Tibial artery (tissue), 4 donors: ENCODE measurements at regions of chr1 and their contacts with region 1.

Region 1: DNA sequence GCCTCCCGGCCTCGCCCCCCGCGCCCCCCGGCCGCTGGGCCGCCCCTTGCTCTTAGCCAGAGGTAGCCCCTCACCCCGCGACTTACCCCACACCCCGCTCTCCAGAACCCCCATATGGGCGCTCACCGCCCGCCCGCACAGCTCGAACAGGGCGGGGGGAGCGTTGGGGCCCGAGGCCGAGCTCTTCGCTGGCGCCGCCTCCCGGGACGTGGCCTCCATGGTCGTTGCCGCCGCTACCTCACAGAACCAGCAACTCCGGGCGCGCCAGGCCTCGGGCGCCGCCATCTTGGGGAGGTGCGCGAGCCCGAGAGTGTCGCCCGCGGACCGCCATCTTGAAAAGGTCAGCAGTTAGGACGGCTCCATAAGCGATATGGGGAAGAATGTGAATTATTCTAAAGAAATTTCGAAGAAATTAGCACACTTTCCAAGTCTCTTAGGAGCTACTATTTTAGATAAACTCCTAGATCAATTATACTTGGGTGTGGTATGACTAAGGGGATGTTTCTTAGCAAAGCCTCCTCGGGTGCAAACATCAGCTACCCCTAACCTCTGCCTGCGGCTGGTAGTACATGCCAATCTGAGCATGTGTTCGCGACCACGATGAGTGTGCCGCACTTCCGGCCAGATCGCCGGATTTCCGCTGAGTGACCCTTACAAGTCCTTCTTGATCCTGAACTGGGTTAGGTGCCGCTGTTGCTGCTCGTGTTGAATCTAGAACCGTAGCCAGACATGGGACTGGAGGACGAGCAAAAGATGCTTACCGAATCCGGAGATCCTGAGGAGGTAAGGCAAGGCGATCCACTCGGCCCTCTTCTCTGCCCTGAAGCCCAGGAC is at the starts of genes LRRC41 and UQCRH:
- DNase-seq: peak; percentile 95 to 96
- H3K4me3 ChIP-seq: peak within 1 kb of the TSS; percentile 77 to 87
- H3K27ac ChIP-seq: peak within 1 kb of the TSS; percentile 95 to 97
- H3K4me1 ChIP-seq: peaks cover 0 to 67% (median 48%) of the 10 kb centered on the region in 4 donors
- H3K27me3 ChIP-seq: no peaks in the 10 kb centered on the region
- CTCF ChIP-seq: no peak

Region 2: DNA sequence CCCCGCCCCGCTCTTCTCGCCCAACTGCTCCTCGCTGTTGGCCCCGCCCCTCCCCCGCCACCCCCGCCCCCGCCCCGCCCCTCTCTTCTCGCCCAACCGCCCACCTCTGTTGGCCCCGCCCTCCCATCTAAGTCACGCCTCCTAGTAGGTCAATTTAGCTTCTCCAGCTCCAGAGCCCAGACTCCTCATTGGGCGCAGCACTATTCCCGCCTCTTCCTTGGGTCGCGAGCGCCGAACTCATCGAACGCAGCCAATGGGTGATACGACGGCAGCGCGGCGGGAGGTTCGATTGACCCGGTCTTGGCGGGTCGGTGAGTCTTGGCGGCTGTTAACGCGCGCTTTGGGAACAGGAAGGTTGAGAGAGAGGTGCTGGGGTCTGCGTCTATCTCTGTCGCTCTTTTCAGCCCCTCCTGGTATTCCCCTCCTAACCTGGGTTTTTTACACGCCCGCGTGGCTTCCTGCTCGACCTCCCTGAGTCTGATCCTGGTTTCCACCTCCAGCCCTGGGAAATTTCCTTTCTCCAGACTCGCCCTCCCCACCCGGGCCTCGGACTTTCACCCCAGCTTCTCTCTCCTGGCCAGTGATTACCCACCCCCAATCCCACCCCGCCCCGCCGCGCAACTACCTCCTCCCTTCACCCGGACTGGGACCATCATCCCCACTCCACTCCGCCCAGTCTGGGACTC is 55.7 kb before region 1 on chr1 and contains the start of gene RAD54L:
- intact Hi-C with region 1: loop called (anchors 5 kb)
- DNase-seq: peak; percentile 98
- H3K4me3 ChIP-seq: peak within 1 kb of the TSS; percentile 58 to 74
- H3K27ac ChIP-seq: peak within 1 kb of the TSS; percentile 45 to 61
- H3K4me1 ChIP-seq: peaks cover 0 to 15% (median 12%) of the 10 kb centered on the region in 4 donors
- H3K27me3 ChIP-seq: no peaks in the 10 kb centered on the region
- CTCF ChIP-seq: no peak

Region 3: GRCh38 chr1:46340404-46341221 is 37.4 kb after region 1 on chr1 and contains the start of gene NSUN4:
- intact Hi-C with region 1: loop called (anchors 2 kb)
- DNase-seq: peak; percentile 95 to 97
- H3K4me3 ChIP-seq: peak within 1 kb of the TSS; percentile 59 to 82
- H3K27ac ChIP-seq: peak within 1 kb of the TSS; percentile 88 to 97
- H3K4me1 ChIP-seq: peaks cover 0 to 24% (median 20%) of the 10 kb centered on the region in 4 donors
- H3K27me3 ChIP-seq: no peaks in the 10 kb centered on the region
- CTCF ChIP-seq: peak; percentile 57 to 62